ENCODE measurements at regions of chr4 and their contacts with region 1.

Region 1: DNA sequence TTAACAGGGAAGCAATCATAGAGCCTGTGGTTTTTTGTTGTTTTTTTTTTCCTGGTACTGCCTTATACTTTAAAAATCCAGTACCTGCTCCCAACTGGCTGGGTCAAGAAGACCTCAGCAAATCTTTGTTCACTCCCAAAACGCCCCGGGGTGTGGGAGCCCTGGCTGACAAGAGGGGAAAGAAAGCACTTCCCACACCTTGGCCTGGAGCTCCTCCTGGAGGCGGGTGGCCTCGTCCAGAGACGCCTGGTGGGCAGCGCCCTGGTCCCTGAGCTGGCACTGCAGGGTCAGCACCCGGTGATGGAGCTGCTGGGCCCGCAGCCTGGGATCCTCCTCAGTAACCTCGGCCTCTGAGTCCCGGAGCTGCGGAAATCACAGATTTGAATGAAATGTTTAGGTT is 38.3 kb downstream of the C4orf50 start:
- DNase-seq: peak; percentile 11
- H3K4me3 Mint-ChIP-seq: no peak overlapping the region
- H3K27ac Mint-ChIP-seq: no peak overlapping the region
- H3K4me1 Mint-ChIP-seq: no peaks in the 10 kb centered on the region
- H3K27me3 Mint-ChIP-seq: peaks cover 16% of the 10 kb centered on the region

Region 2: DNA sequence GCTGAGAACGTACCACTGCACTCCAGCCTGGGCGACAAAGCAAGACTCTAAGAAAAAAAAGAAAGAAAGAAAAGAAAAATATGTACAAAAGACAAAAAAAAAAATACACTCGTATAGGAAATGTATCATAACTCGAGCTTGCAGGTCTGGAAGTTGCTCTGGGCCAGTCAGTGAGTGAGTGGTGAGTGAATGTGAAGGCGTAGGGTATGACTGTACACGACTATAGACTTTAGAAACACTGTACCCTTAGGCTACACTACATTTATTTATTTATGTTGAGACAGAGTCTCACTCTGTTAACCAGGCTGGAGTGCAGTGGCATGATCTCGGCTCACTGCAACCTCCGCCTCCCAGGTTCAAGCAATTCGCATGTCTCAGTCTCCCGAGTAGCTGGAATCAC is 301.0 kb before region 1 on chr4:
- CTCF ChIA-PET with region 1: no interaction called
- intact Hi-C with region 1: no loop called
- DNase-seq: no peak
- H3K4me3 Mint-ChIP-seq: no peak overlapping the region
- H3K27ac Mint-ChIP-seq: no peak overlapping the region
- H3K4me1 Mint-ChIP-seq: no peaks in the 10 kb centered on the region
- H3K27me3 Mint-ChIP-seq: peaks cover 4% of the 10 kb centered on the region

Region 3: DNA sequence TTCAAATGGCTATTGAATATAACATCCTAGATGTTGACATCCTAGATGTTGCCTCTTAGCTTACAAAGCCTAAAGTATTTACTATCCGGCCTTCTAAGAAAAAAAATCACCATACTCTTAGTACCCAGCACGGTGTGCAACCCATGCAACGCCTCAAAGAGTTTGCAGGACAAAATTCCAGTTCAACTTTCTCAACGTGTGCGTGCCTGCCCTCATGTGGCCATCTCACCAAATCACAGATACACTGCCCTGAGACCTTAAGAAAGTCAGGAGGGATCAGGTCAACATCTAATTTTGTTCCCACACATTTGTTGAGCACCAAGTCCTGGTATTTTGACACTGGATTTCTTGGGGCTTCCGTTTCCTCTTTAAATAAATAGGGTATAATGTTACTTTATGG is 155.3 kb before region 1 on chr4:
- CTCF ChIA-PET with region 1: no interaction called
- intact Hi-C with region 1: loop called (anchors 5 kb)
- DNase-seq: peak; percentile 15
- H3K4me3 Mint-ChIP-seq: no peak overlapping the region
- H3K27ac Mint-ChIP-seq: no peak overlapping the region
- H3K4me1 Mint-ChIP-seq: peaks cover 3% of the 10 kb centered on the region
- H3K27me3 Mint-ChIP-seq: peaks cover 5% of the 10 kb centered on the region

Region 4: DNA sequence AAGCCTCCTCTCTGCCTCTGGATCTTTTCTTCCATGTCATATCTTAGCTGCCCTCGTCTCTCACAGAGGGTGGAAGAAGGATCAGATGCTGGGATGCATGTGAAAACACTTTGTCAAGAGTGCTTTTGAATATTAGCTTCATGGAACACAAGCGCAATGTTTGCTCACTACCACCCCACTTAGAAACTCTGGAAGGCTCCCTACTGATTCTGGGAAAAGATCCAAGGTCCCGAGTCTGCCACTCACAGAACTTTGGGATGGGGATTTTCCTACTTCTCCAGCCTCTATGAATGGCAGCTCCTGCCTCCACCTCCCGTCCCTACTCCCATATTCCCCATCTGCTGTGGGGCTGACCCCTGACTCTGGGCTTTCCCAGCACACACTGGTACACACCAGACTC is 46.9 kb before region 1 on chr4:
- CTCF ChIA-PET with region 1: no interaction called
- intact Hi-C with region 1: no loop called
- DNase-seq: no peak
- H3K4me3 Mint-ChIP-seq: no peak overlapping the region
- H3K27ac Mint-ChIP-seq: no peak overlapping the region
- H3K4me1 Mint-ChIP-seq: no peaks in the 10 kb centered on the region
- H3K27me3 Mint-ChIP-seq: peaks cover 2% of the 10 kb centered on the region

Measured in activated naive CD4-positive, alpha-beta T cell treated with anti-CD3 and anti-CD28 coated beads for 36 hours (primary cell).